Dendritic cell treated with granulocyte-macrophage colony-stimulating factor and Interleukin-4, amounts not matched to agents 40 ng/mL and 50 ng/mL, for 4 days (primary cell): ENCODE measurements at regions of chr11 and their contacts with region 1.

Region 1: DNA sequence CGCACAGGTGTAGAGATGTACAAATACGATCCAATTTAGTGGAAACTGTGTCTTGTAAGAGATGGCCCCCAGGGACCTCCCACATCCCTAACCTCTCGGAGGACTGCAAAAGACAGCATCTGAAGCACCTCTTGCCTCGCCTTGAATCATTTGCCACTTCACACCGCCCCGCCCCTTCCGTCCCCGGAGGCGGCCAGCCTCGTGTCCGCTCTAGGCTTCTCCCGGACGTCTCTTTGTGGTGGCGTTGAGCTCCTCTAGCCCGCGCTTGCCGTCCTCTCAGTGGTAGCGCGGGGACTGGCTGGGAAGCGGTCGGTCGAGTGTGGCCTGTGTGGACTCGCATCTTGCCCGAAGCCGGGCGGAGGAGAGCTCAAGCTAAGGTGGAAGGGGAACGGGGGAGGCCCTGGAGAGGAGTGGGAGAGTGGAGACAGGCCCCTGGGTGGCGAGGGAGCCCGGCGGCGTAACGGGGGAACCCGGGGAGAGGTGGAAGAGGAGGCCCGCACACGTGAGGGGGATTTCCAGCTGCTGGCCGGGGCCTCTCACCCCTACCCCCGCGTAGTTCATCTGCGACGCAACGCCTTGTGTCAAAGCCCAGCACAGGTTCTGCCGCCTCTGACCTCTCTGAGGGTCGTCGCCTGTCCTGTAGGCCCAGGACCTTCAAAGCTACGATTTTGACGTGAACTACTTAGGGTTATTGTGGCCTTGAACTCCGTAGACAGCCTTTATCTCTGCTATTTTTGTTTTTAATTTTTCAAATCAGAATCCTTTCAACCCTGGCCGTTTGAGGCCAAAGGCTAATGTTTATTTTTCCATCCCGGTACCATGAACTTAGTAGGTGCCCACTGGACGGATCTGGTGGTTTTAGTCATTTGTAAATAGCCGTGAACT is at the start of gene ARL14EP:
- H3K4me3 Mint-ChIP-seq: peak within 1 kb of the TSS; percentile 87
- H3K27ac Mint-ChIP-seq: peak within 1 kb of the TSS; percentile 96
- H3K4me1 Mint-ChIP-seq: peaks cover 23% of the 10 kb centered on the region
- H3K27me3 Mint-ChIP-seq: peaks cover 9% of the 10 kb centered on the region

Region 2: DNA sequence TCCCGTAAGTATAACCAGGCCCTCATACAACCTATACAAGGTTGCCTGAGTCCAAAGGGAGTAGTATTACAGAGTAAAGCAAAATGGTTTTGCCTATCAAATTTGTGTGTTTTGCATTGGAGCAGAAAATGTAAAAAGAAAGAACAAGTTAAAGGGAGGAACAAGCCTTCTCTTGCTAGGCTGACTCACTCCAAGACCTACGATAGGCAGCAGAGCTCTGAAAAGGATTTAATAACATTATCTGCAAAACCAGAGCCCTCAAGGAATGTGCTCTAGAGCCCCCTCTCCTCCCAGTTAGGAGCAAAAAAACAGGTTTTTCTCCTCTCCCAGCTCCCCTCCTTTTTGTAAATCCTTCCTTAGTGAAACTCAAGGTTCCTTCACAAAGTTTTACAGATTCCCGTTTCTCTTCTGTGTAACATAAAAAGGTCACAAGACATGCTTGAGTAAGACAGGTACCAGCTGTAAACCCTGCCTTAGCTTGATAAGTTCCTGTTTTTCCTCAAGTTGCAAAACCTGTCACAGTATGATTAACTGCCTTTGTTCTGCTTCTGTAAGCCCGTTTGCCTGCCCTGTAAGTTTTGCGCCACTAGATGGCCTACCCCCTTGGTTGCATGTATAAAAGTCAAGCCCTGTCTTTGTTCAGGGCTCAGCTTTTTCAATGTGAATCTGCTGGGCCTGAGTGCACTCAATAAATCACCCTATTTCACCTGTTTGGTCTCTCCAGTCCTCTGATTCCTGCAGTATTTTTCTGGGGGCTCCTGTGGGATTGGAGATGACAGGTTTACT is 804.5 kb before region 1 on chr11:
- intact Hi-C with region 1: loop called (anchors 10 kb)
- H3K4me3 Mint-ChIP-seq: peak overlapping the region; percentile 2
- H3K27ac Mint-ChIP-seq: peak overlapping the region; percentile 74
- H3K4me1 Mint-ChIP-seq: peaks cover 25% of the 10 kb centered on the region
- H3K27me3 Mint-ChIP-seq: no peaks in the 10 kb centered on the region